A549 (cell line): ENCODE measurements at regions of chr5 and their contacts with region 1.

Region 1: GRCh38 chr5:160021831-160022446 is 13.0 kb downstream of the TTC1 start:
- DNase-seq: peak; percentile 58 to 61
- ATAC-seq: peak; percentile 93 to 97
- H3K4me3 ChIP-seq: no peak overlapping the region
- H3K27ac ChIP-seq: no peak overlapping the region
- H3K4me1 ChIP-seq: no peaks in the 10 kb centered on the region
- CTCF ChIP-seq: peak; percentile 80
- EP300 ChIP-seq: no peak
- POLR2A ChIP-seq: no peak
- RAD21 ChIP-seq: peak; percentile 77 to 81

Region 2: DNA sequence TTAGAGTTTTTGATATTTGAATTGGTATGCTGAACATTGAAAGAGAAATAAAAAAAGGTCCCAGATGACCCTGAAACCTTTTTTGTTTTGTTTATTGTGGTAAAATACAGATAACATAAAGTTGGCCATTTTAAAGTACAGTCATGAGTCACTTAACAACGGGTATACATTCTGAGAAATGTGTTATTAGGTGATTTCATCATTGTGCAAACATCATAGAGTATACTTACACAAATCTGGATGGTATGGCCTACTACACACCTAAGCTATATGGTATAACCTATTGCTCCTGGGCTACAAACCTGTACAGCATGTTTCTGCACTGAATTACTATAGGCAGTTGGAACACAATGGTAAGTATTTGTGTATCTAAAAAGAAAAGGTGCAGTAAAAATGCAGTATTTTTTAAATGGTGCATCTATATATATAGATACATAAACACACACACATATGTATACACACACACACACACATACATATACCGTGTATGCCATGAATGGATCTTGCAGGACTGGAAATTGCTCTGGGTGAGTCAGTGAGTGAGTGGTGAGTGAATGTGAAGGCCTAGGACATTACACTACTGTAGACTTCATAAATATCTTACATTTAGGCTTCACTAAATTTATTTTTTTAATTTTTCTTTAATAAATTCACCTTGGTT is 18.0 kb after region 1 on chr5:
- CTCF ChIA-PET with region 1: interaction called, 16 read pairs
- POLR2A ChIA-PET with region 1: no interaction called
- DNase-seq: no peak
- ATAC-seq: no peak
- H3K4me3 ChIP-seq: no peak overlapping the region
- H3K27ac ChIP-seq: no peak overlapping the region
- H3K4me1 ChIP-seq: peaks cover 6% of the 10 kb centered on the region; the same call in 1 of the 3 replicates
- CTCF ChIP-seq: no peak
- EP300 ChIP-seq: no peak
- POLR2A ChIP-seq: no peak
- RAD21 ChIP-seq: no peak

Region 3: DNA sequence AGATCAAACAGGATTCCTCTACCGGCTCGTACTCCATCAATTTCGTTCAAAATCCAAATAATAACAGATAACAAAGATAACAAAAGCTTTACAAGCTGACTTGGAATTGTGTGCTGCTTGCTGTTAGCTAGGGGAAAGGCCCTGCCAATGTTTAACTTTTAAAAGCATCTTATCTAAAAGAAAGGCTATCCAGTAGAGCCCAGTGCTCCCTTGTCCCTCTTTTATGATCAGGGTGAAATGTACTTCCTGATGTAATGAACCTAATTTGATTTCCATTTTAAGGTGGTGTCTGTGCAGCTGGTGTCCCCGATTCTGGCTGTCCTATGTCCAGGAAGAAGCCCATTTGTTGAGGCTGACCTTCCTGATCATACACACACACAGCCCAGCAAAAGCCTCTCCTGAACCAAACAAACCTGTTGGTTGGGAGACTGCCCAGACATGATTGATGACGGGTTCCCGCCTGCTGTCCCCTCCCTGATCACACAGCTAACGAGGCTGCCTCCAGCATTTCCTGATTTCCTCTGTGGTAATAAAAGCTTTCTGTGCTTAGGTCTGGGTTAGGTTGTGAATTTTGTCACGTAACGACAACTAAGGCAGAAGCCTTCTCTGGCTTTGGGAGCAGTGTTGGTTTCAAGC is 43.2 kb after region 1 on chr5:
- CTCF ChIA-PET with region 1: interaction called, 11 read pairs
- POLR2A ChIA-PET with region 1: no interaction called
- DNase-seq: no peak
- ATAC-seq: no peak
- H3K4me3 ChIP-seq: no peak overlapping the region
- H3K27ac ChIP-seq: no peak overlapping the region
- H3K4me1 ChIP-seq: no peaks in the 10 kb centered on the region
- CTCF ChIP-seq: no peak
- EP300 ChIP-seq: no peak
- POLR2A ChIP-seq: no peak
- RAD21 ChIP-seq: no peak

Region 4: GRCh38 chr5:160352308-160352707 is 330.4 kb after region 1 on chr5:
- CTCF ChIA-PET with region 1: interaction called, 13 read pairs
- POLR2A ChIA-PET with region 1: no interaction called
- DNase-seq: no peak
- ATAC-seq: no peak
- H3K4me3 ChIP-seq: no peak overlapping the region
- H3K27ac ChIP-seq: no peak overlapping the region
- H3K4me1 ChIP-seq: no peaks in the 10 kb centered on the region
- CTCF ChIP-seq: no peak
- EP300 ChIP-seq: no peak
- POLR2A ChIP-seq: no peak
- RAD21 ChIP-seq: no peak

Region 5: GRCh38 chr5:160508780-160509361 is 486.9 kb after region 1 on chr5:
- CTCF ChIA-PET with region 1: no interaction called
- POLR2A ChIA-PET with region 1: no interaction called
- DNase-seq: peak; percentile 78 to 79
- ATAC-seq: peak; percentile 84 to 94
- H3K4me3 ChIP-seq: no peak overlapping the region
- H3K27ac ChIP-seq: no peak overlapping the region
- H3K4me1 ChIP-seq: no peaks in the 10 kb centered on the region
- CTCF ChIP-seq: peak; percentile 85
- EP300 ChIP-seq: no peak
- POLR2A ChIP-seq: no peak
- RAD21 ChIP-seq: peak; percentile 88 to 95